ENCODE measurements at regions of chr13 and their contacts with region 1.

Region 1: GRCh38 chr13:39777527-39778061 is 122.1 kb downstream of the COG6 start:
- DNase-seq: peak; percentile 24
- H3K4me3 Mint-ChIP-seq: no peak overlapping the region
- H3K27ac Mint-ChIP-seq: peak overlapping the region; percentile 67
- H3K4me1 Mint-ChIP-seq: peaks cover 10% of the 10 kb centered on the region
- H3K27me3 Mint-ChIP-seq: no peaks in the 10 kb centered on the region
- CTCF ChIP-seq: no peak

Region 2: GRCh38 chr13:39913928-39914327 is 136.3 kb after region 1 on chr13:
- CTCF ChIA-PET with region 1: no interaction called
- intact Hi-C with region 1: loop called (anchors 10 kb)
- DNase-seq: no peak
- H3K4me3 Mint-ChIP-seq: no peak overlapping the region
- H3K27ac Mint-ChIP-seq: no peak overlapping the region
- H3K4me1 Mint-ChIP-seq: no peaks in the 10 kb centered on the region
- H3K27me3 Mint-ChIP-seq: no peaks in the 10 kb centered on the region
- CTCF ChIP-seq: no peak

Region 3: GRCh38 chr13:39942552-39943273 is 165.1 kb after region 1 on chr13:
- CTCF ChIA-PET with region 1: interaction called, 6 read pairs
- intact Hi-C with region 1: loop called (anchors 5 kb)
- DNase-seq: peak; percentile 70
- H3K4me3 Mint-ChIP-seq: no peak overlapping the region
- H3K27ac Mint-ChIP-seq: no peak overlapping the region
- H3K4me1 Mint-ChIP-seq: peaks cover 7% of the 10 kb centered on the region
- H3K27me3 Mint-ChIP-seq: no peaks in the 10 kb centered on the region
- CTCF ChIP-seq: peak; percentile 86

Region 4: DNA sequence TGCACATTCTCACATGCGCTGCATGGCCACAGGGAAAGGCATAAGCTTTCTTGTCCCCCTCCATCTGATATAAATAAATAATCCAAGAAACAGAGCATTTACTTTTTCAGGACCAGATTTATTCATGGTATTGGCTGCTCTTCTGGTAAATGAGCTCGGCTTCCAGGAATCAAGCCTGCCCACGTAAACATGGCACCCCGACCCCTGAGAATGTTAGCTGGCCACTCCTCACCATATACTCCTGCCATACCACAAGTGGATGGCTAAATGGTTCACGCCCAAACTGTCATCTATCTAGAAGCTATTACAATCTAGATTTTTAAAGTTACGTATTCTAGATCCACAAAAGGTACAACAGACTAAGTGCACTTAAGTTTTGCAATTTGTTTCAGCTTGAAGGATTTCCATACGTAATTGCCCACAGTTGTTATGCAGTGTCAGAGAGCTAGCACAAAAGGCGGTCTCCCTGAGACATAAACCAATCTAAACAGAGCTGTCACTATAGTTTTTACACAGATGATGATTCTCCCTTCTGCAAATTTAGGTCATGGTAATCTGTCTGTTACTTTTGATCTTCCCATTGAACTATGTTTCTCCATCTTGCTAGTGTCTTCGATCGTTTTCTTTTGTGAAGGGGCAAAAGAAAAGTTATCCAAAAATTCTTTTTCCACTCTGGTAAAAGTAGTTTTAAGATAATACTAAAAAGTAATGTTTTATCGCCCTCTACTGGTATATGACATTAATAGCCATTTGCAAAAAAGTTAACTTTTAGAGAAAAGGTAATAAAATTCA is 905.1 kb after region 1 on chr13:
- CTCF ChIA-PET with region 1: interaction called, 3 read pairs
- intact Hi-C with region 1: loop called (anchors 5 kb)
- DNase-seq: no peak
- H3K4me3 Mint-ChIP-seq: no peak overlapping the region
- H3K27ac Mint-ChIP-seq: no peak overlapping the region
- H3K4me1 Mint-ChIP-seq: peaks cover 8% of the 10 kb centered on the region
- H3K27me3 Mint-ChIP-seq: no peaks in the 10 kb centered on the region
- CTCF ChIP-seq: peak; percentile 36

Region 5: DNA sequence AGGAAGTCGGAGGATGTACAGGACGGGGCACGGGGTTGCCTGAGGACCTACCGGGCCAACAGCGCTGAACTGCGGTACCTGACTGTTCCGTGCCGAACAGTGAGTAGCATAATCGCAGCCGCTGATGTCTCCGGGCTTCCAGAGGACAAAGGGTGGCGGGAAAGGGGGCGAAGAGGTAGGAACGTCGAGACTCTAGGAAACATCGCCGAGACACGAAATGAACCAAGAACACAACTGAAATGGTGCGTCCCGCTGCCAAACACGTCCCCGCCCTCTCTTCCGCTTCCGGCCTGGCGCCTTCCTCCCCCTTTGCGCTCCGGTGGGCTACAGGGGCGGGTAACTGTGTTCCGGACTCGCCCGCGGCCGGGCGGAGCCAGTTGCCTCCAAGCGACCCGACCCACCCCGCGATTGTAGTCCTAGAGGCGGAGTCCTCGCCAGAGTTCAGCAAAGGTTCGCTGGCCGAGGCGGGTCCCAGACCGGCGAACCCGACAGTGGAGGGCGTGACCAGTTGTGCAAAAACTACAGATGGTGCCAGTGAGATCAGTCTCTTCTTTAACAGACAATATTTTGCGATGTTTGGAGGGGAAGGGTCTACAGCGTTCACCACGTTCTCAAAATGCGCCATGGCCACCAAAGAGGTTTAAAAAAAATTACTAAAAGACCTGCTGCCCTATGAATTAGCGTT is 993.5 kb after region 1 on chr13 and contains the start of gene MRPS31:
- CTCF ChIA-PET with region 1: no interaction called
- intact Hi-C with region 1: loop called (anchors 10 kb)
- DNase-seq: peak; percentile 91
- H3K4me3 Mint-ChIP-seq: peak within 1 kb of the TSS; percentile 84
- H3K27ac Mint-ChIP-seq: peak within 1 kb of the TSS; percentile 76
- H3K4me1 Mint-ChIP-seq: peaks cover 9% of the 10 kb centered on the region
- H3K27me3 Mint-ChIP-seq: no peaks in the 10 kb centered on the region
- CTCF ChIP-seq: no peak
- total RNA-seq, gene MRPS31: 15.3 and 17.9 TPM in 2 replicates